ENCODE measurements at regions of chr3 and their contacts with region 1.

Region 1: DNA sequence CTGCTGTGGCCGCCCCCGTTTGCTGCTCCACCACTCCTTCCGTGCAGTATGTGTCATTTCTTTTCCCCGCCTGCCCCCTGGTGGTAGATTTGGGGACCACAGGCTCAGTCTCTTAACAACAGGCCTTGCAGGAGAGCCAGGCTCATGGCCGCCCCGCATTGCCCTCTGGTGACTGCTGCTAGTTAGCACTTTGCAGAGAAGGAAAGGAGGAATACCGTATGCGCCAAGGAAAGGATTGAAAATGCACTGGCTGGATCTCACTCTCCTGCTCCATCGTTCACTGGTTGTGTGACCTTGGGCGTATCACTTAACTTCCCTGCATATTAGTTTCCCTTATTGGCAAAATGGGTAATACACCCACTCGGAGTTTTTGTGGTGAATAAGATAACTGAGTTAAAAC is 39.3 kb upstream of the PXYLP1 start:
- DNase-seq: peak; percentile 93 to 96 (median 93)
- H3K4me3 ChIP-seq: no peak overlapping the region
- H3K27ac ChIP-seq: no peak overlapping the region
- H3K4me1 ChIP-seq: peaks cover 0 to 6% (median 1%) of the 10 kb centered on the region in 4 experiments
- H3K27me3 ChIP-seq: peaks cover 0 to 4% (median 0%) of the 10 kb centered on the region in 5 experiments

Region 2: DNA sequence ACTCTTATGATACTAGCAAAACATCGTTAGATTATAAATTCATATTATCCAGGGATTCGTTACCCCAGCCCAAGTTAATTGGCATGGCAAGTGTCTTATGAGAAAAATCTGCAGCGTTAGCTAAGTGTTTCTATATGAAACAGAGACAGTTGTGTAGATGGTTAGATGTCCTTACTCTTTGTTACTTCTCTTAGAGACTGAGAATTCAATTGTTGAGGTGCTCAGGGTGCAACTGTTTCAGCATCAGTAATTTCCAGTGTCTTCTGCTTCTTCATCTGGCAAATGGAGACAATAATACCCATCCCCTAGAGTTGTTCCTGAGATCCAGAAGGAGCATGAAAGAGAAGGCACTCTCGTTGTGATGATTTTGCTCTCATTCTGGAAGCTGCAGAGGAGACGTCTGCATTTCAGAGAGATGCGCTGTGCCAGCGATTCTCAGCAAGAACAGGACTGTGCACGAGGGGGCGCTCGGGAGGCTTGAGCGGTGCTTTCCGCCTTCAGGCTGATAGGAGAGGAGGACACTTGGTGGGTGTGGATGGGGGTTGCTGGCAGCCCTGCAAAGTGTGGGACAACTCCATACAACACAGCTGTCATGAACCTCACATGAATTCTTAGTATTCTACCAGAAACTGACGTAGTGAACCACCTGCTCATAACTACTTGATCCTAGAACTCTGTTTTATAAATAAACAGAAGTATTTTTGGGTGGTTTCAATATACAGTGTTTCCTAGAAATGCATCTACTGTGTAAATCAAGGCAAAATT is 180.9 kb before region 1 on chr3:
- CTCF ChIA-PET with region 1: interaction called, 19 read pairs
- POLR2A ChIA-PET with region 1: no interaction called
- DNase-seq: peak; percentile 65 to 85 (median 82)
- H3K4me3 ChIP-seq: no peak overlapping the region
- H3K27ac ChIP-seq: no peak overlapping the region
- H3K4me1 ChIP-seq: peaks cover 0 to 4% (median 0%) of the 10 kb centered on the region in 4 experiments
- H3K27me3 ChIP-seq: peaks cover 0 to 2% (median 0%) of the 10 kb centered on the region in 5 experiments

Region 3: DNA sequence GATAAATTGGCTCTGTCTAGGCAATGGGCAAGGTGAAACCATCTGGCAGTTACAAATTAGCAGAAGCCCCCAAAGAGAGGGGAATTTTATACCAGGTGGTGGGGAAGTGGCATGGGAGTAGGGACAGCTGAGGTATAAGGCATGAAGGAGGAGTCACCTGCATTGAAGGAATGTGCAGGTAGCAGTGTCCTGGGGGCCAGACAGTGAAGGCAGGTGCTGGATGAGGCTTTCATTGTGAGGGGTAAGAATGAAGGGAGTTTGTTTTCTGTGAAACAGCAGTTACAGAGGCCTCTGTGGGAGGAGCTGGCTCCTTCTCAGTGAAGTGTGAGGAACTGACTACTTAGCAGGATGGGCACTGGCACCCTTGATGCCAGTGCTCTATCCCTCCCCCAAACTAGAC is 20.2 kb after region 1 on chr3:
- CTCF ChIA-PET with region 1: no interaction called
- POLR2A ChIA-PET with region 1: no interaction called
- DNase-seq: no peak
- H3K4me3 ChIP-seq: no peak overlapping the region
- H3K27ac ChIP-seq: no peak overlapping the region
- H3K4me1 ChIP-seq: no peaks in the 10 kb centered on the region
- H3K27me3 ChIP-seq: no peaks in the 10 kb centered on the region